Head of caudate nucleus (tissue), 42 donors: ENCODE measurements at regions of chr17 and their contacts with region 1.

Region 1: GRCh38 chr17:57833179-57833939 is 16.5 kb downstream of the MRPS23 start:
- DNase-seq: peak in 41 of 42 donors; percentile 32 to 89 (median 70)

Region 2: GRCh38 chr17:57130761-57131461 is 702.4 kb before region 1 on chr17:
- intact Hi-C with region 1: loop called (anchors 5 kb)
- DNase-seq: peak; percentile 60 to 96 (median 89)